ENCODE measurements at regions of chr15 and their contacts with region 1.

Region 1: DNA sequence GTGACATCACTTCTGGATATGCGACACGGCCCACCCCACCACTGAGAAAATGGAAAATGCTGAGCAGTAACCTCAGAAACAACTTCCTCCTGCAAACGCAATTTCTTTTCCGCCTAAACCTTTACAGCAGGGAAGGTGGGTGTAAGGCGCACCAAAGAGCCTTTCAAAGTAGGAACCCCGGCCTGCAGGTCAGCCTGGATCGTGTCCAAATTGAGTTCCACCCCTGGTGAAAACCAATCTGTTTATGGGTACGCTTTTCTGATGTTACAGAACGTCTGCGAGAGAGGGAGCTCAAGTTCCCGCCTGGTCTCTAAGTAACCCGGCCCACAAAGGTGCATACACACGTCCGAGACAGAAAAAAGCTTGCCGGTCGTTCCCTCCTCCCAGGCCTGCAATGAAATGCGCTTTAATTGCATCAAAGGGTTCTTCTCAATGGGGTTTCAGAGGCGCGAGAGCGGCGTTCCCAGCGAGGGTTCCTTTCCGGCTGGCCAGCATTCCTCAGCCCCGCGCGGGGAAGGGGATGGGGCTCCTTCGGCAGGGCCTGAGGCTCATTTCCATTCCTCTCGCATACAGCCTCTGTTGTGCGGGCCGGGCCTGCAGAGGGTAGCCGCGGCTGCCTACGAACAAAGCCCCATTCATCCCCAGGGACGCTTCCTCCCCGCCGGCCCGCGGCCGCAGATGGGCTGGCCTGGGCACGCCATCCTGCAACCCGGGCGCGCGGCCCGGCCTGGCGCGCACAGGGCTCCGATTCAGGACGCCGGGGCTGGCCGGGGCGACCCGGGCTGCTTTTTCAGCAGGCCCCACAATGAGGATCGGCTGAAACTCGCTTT is 138.1 kb downstream of the TMCO5A start:
- DNase-seq: peak in 1 of 2 donors; percentile 21
- ATAC-seq: peak; percentile 39 to 52
- H3K4me3 ChIP-seq: peak overlapping the region; percentile 40 to 66 (median 58)
- H3K27ac ChIP-seq: peak overlapping the region; percentile 55 to 76 (median 66)
- H3K4me1 ChIP-seq: peaks cover 5 to 13% of the 10 kb centered on the region in 2 donors
- H3K27me3 ChIP-seq: peaks cover 0 to 4% (median 0%) of the 10 kb centered on the region in 3 donors
- CTCF ChIP-seq: no peak
- POLR2A ChIP-seq: no peak

Region 2: DNA sequence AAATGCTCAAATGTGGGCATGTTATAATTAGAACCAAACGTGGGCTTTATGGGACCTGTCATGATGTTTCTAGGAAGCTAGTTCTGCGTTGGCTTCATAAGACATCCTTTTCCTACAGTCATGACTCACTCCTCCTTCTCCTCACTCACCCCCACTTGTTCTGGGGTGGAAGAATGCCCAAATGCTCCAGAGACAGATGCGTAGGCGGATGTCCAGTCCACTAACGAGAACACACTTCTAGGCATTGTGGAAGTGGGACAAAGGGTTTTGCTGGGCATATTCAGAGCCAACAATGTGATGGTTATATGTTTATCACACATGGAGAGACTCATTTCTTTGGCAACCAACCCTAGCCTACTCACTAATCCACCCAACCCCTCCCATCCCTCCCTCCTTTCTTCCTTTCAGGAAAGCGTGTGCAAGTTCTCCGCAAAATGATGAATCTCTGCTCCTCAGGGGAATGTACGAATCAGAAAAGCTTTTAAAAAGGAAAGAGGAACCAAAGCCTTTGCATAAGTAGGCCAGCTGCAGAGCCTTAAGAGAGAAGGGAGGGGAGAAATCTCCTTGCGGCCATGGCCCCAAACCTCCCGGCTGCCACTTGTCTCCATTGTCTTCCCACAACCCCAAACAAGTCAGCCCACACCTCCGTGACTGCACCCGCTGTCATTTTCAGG is 57.1 kb after region 1 on chr15:
- in situ Hi-C with region 1: loop called in 1 of 4 experiments (anchors 5 kb)
- intact Hi-C with region 1: loop called (anchors 2 kb)
- DNase-seq: peak; percentile 33 to 68
- ATAC-seq: peak; percentile 71 to 72
- H3K4me3 ChIP-seq: peak overlapping the region in 3 of 4 donors; percentile 17 to 33 (median 28)
- H3K27ac ChIP-seq: peak overlapping the region; percentile 55 to 73 (median 64)
- H3K4me1 ChIP-seq: peaks cover 0 to 4% of the 10 kb centered on the region in 2 donors
- H3K27me3 ChIP-seq: no peaks in the 10 kb centered on the region
- CTCF ChIP-seq: no peak
- POLR2A ChIP-seq: peak in 1 of 2 donors; percentile 14

Region 3: GRCh38 chr15:38389924-38390542 is 317.5 kb after region 1 on chr15:
- in situ Hi-C with region 1: no loop called
- intact Hi-C with region 1: loop called (anchors 10 kb)
- DNase-seq: peak; percentile 10 to 33
- ATAC-seq: peak in 1 of 2 donors; percentile 30
- H3K4me3 ChIP-seq: no peak overlapping the region
- H3K27ac ChIP-seq: no peak overlapping the region
- H3K4me1 ChIP-seq: no peaks in the 10 kb centered on the region
- H3K27me3 ChIP-seq: no peaks in the 10 kb centered on the region
- CTCF ChIP-seq: peak; percentile 32 to 68 (median 60)
- POLR2A ChIP-seq: no peak

Measured in gastrocnemius medialis (tissue), 4 donors.